B cell (primary cell): ENCODE measurements at regions of chr5 and their contacts with region 1.

Region 1: DNA sequence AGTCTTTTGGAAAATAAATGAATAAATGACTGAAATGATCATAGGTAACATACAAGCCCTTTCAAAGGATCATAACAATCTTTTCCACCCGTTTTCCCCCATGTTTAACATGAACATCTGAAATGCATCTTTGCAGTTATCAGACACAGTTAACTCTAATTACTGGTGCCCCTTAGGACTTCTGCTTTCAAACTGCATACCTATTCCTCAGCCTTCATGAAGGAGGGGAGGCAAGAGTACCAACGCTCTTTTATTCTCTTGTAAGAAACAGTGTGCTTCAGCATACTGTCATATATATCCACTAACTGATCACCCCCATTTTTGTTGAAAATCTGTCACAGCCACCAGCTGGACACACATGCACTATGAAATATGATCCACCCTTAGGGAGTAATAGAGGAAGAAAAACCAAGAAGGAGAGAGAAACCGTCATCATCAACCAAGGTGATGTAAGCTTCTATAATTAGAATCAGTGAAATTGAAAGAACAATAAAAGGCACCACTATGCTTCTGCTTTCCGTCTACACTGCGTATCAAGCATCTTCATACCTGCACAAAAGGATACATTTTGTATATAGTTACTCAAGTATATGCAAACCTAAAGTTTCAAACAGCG is 98.7 kb downstream of the RAPGEF6 start:
- DNase-seq: peak; percentile 92
- ATAC-seq: peak; percentile 88
- H3K4me3 ChIP-seq: peak overlapping the region in 3 of 5 experiments; percentile 27 to 35 (median 35)
- H3K4me3 Mint-ChIP-seq: peak overlapping the region; percentile 60
- H3K27ac ChIP-seq: peak overlapping the region; percentile 82 to 96
- H3K27ac Mint-ChIP-seq: peak overlapping the region; percentile 87
- H3K4me1 ChIP-seq: peaks cover 18 to 19% of the 10 kb centered on the region in 2 donors
- H3K4me1 Mint-ChIP-seq: peaks cover 42% of the 10 kb centered on the region
- H3K27me3 ChIP-seq: no peaks in the 10 kb centered on the region
- H3K27me3 Mint-ChIP-seq: no peaks in the 10 kb centered on the region
- CTCF ChIP-seq: no peak

Region 2: GRCh38 chr5:131096774-131097710 is 439.3 kb before region 1 on chr5:
- CTCF ChIA-PET with region 1: no interaction called
- POLR2A ChIA-PET with region 1: no interaction called
- intact Hi-C with region 1: no loop called
- DNase-seq: no peak
- ATAC-seq: no peak
- H3K4me3 ChIP-seq: no peak overlapping the region
- H3K4me3 Mint-ChIP-seq: no peak overlapping the region
- H3K27ac ChIP-seq: no peak overlapping the region
- H3K27ac Mint-ChIP-seq: no peak overlapping the region
- H3K4me1 ChIP-seq: no peaks in the 10 kb centered on the region
- H3K4me1 Mint-ChIP-seq: no peaks in the 10 kb centered on the region
- H3K27me3 ChIP-seq: peaks cover 0 to 5% (median 0%) of the 10 kb centered on the region in 4 experiments
- H3K27me3 Mint-ChIP-seq: peaks cover 25% of the 10 kb centered on the region
- CTCF ChIP-seq: no peak

Region 3: DNA sequence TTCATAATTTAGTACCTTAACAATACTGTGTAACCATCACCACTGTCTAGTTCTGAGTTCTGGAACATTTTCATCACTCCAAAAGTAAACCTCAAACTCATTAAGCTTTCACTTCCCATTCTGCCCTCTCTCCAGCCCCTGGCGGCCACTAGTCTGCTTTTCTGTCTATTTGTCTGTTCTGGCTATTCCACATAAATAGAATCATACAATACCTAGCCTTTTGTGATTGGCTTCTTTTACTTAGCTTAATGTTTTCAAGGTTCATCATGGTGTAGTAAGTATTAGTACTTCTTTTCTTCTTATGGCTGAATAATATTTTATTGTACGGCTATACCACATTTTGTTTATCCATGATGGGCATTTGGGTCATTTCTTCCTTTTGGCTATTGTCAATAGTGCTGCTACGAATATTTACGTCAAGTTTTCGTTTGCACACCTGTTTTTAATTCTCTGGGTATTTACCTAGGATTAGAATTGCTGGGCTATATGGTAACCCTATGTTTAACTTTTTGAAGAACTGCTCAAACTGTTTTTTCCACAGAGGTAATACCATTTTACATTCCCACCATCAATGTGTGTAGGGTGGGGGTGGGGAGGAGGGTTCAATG is 39.8 kb before region 1 on chr5:
- CTCF ChIA-PET with region 1: interaction called, 3 read pairs
- POLR2A ChIA-PET with region 1: no interaction called
- intact Hi-C with region 1: loop called (anchors 5 kb)
- DNase-seq: peak; percentile 51
- ATAC-seq: peak; percentile 88
- H3K4me3 ChIP-seq: no peak overlapping the region
- H3K4me3 Mint-ChIP-seq: no peak overlapping the region
- H3K27ac ChIP-seq: no peak overlapping the region
- H3K27ac Mint-ChIP-seq: no peak overlapping the region
- H3K4me1 ChIP-seq: no peaks in the 10 kb centered on the region
- H3K4me1 Mint-ChIP-seq: peaks cover 18% of the 10 kb centered on the region
- H3K27me3 ChIP-seq: no peaks in the 10 kb centered on the region
- H3K27me3 Mint-ChIP-seq: no peaks in the 10 kb centered on the region
- CTCF ChIP-seq: peak; percentile 61

Region 4: GRCh38 chr5:131514316-131515283 is 21.7 kb before region 1 on chr5:
- CTCF ChIA-PET with region 1: no interaction called
- POLR2A ChIA-PET with region 1: no interaction called
- intact Hi-C with region 1: loop called (anchors 1 kb)
- DNase-seq: peak; percentile 52
- ATAC-seq: peak; percentile 41
- H3K4me3 ChIP-seq: peak overlapping the region in 1 of 5 experiments; percentile 44
- H3K4me3 Mint-ChIP-seq: peak overlapping the region; percentile 58
- H3K27ac ChIP-seq: peak overlapping the region in 1 of 2 donors; percentile 69
- H3K27ac Mint-ChIP-seq: peak overlapping the region; percentile 34
- H3K4me1 ChIP-seq: peaks cover 16 to 17% of the 10 kb centered on the region in 2 donors
- H3K4me1 Mint-ChIP-seq: peaks cover 24% of the 10 kb centered on the region
- H3K27me3 ChIP-seq: no peaks in the 10 kb centered on the region
- H3K27me3 Mint-ChIP-seq: no peaks in the 10 kb centered on the region
- CTCF ChIP-seq: peak; percentile 27

Region 5: GRCh38 chr5:131550606-131551005 is 14.3 kb after region 1 on chr5:
- CTCF ChIA-PET with region 1: interaction called, 6 read pairs
- POLR2A ChIA-PET with region 1: no interaction called
- intact Hi-C with region 1: loop called (anchors 2 kb)
- DNase-seq: no peak
- ATAC-seq: no peak
- H3K4me3 ChIP-seq: no peak overlapping the region
- H3K4me3 Mint-ChIP-seq: no peak overlapping the region
- H3K27ac ChIP-seq: peak overlapping the region in 1 of 2 donors; percentile 17
- H3K27ac Mint-ChIP-seq: peak overlapping the region; percentile 37
- H3K4me1 ChIP-seq: peaks cover 17 to 37% of the 10 kb centered on the region in 2 donors
- H3K4me1 Mint-ChIP-seq: peaks cover 54% of the 10 kb centered on the region
- H3K27me3 ChIP-seq: no peaks in the 10 kb centered on the region
- H3K27me3 Mint-ChIP-seq: no peaks in the 10 kb centered on the region
- CTCF ChIP-seq: no peak

Region 6: DNA sequence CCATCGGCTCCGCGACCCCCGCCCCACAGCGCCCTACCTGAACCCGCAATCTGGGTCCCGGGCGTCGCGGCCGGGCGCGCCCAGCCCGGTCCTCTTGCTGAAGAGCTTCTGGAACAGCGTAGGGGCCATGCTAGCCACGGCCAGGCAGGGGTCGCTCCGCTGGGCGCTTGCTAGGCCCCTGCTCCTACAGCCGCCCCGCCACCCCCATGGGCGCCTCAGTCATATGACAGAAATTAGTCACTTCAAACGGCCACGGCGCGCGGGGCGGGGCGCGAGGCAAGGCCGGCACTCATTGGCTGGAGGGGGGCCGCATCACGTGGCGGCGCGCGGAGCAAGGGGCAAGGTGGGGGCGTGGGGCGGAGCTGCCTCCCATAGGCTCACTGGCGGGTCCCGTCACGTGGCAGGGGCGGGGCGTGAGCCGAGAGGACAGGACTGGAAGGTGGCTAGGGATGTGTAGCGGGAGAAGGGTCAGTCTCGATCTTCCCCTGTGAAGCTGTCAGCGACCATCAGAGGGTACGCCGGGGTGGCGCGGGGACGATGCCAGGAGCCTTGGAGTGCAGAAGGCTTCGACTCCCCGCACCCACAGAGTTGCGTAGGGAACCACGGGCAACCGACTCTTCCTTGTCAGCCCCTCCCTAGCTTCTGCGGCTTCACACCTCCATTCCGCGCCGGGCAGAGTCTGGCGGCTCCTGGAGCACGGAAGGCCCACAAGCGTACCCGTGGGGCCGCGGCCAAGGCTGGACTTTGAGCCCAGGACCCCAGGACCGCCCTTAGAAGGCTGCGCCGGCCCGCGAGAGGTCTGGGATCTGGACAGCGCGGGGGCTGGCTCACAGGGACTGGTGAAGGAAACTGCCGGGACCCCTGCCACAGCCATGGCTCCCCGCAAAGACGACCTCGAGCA is 260.7 kb after region 1 on chr5 and contains the start of gene FNIP1:
- CTCF ChIA-PET with region 1: no interaction called
- POLR2A ChIA-PET with region 1: no interaction called
- intact Hi-C with region 1: loop called (anchors 2 kb)
- DNase-seq: peak; percentile 98
- ATAC-seq: peak; percentile 93
- H3K4me3 ChIP-seq: peak within 1 kb of the TSS; percentile 66 to 82 (median 76)
- H3K4me3 Mint-ChIP-seq: peak within 1 kb of the TSS; percentile 98
- H3K27ac ChIP-seq: peak within 1 kb of the TSS; percentile 82 to 100
- H3K27ac Mint-ChIP-seq: peak within 1 kb of the TSS; percentile 96
- H3K4me1 ChIP-seq: peaks cover 15 to 21% of the 10 kb centered on the region in 2 donors
- H3K4me1 Mint-ChIP-seq: peaks cover 40% of the 10 kb centered on the region
- H3K27me3 ChIP-seq: no peaks in the 10 kb centered on the region
- H3K27me3 Mint-ChIP-seq: no peaks in the 10 kb centered on the region
- CTCF ChIP-seq: no peak
- total RNA-seq, gene FNIP1: 52.8 and 57.8 TPM in 2 replicates